ENCODE measurements at regions of chr3 and their contacts with region 1.

Region 1: GRCh38 chr3:129003578-129004160 is 2.6 kb downstream of the EFCC1 start:
- DNase-seq: peak; percentile 73
- ATAC-seq: peak; percentile 70
- H3K4me3 Mint-ChIP-seq: peak overlapping the region; percentile 61
- H3K27ac Mint-ChIP-seq: peak overlapping the region; percentile 32
- H3K4me1 Mint-ChIP-seq: peaks cover 30% of the 10 kb centered on the region
- H3K27me3 Mint-ChIP-seq: peaks cover 37% of the 10 kb centered on the region

Region 2: DNA sequence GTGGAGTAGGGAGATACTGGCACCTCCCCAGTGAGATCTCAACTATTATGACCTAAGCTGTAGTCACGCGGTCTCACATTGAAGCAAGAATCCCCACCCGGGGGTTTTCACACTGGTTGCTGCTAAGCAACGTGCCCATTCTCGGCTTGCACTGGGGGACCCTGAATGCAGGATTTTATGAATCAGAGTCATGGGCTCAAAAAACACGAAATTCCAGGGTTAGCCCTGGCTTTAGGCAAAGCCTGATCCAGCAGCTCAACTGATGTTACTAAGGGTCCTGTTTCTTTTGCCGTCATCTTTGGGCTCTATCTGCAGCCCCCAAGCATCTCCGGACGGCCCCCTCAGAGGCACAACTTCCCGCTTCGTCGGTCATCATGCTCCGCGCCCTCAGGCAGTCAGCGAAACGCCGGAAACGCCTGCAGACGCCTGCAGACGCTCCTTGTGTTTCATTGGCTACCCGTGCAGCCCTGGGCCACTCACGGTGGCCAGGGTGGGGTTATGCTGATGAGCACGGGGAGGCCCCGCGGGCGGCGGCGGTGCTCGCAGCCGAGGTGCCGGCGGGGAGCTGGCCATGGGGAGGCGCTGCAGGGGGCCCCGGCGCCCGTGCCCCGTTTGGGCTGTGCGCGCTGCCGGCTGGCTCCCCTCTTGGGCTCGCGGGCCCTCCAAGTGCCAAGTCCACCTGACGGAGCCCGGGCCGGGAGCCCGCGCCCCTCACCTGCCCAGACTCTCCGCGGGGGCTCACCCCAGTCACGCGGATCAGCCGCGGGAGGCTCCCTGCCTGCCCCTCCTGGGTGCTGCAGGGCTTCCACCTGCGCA is 23.3 kb after region 1 on chr3:
- POLR2A ChIA-PET with region 1: interaction called, 18 read pairs
- DNase-seq: peak; percentile 95
- ATAC-seq: peak; percentile 100
- H3K4me3 Mint-ChIP-seq: peak overlapping the region; percentile 75
- H3K27ac Mint-ChIP-seq: peak overlapping the region; percentile 89
- H3K4me1 Mint-ChIP-seq: peaks cover 20% of the 10 kb centered on the region
- H3K27me3 Mint-ChIP-seq: no peaks in the 10 kb centered on the region

Measured in activated naive CD8-positive, alpha-beta T cell treated with anti-CD3 and anti-CD28 coated beads, Interleukin-2, amount 10 ng/mL, durations not matched to agents 7 days and 5 days (primary cell).